GM18951 (cell line): ENCODE measurements at regions of chr7 and their contacts with region 1.

Region 1: DNA sequence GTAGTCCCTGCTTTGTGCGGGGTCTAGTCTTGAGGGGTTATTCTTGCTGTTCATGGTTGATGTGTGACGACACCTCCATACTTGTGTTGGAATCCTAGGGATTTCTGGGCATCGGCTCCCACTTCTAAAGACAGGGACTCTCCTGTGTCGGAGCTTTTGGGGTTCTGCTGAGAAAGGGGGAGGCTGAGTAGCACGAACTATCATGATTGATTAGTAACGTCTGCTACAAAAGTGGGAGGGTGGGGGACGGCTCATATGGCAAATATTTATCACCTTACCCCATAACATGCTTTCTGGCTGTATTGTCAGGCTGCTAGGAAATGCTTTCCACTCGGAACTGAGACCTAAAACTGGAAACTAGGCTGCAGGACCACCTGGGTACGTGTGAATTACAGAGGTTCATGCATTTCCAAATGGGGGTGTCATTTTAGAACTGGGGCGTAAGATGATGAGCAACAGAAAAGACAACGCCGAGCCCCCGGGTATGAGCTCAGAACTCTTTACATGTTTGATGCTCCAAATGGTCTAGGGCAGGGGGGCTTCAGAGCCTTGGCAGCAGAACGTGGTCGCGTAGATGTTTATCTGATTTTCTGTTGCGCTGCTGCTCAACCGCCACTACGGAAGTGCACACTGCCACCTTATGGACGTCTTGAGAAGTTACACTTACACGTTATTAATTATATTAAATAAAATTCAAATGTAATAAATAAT is 15.1 kb upstream of the NME8 start:
- POLR2A ChIP-seq: no peak

Region 2: GRCh38 chr7:37643876-37644275 is 189.4 kb before region 1 on chr7:
- in situ Hi-C with region 1: loop called (anchors 25 kb)
- POLR2A ChIP-seq: no peak

Region 3: DNA sequence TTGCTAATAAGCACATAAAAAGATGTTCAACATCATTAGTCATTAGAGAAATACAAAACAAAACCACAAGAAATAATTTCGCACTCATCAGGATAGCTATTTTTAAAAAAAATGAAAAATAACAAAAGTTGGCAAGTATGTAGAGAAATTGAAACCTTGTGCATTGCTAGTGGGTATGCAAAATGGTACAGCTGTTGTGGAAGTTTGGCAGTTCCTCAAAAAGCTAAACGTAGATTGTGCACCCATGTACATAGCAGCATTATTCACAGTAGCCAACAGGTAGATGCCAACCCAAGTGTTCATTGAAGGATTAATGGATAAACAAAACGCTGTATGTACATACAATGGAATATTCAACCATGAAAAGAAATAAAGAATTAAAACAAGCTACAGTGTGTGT is 309.5 kb after region 1 on chr7:
- in situ Hi-C with region 1: no loop called
- POLR2A ChIP-seq: no peak